ENCODE measurements at regions of chr19 and their contacts with region 1.

Region 1: DNA sequence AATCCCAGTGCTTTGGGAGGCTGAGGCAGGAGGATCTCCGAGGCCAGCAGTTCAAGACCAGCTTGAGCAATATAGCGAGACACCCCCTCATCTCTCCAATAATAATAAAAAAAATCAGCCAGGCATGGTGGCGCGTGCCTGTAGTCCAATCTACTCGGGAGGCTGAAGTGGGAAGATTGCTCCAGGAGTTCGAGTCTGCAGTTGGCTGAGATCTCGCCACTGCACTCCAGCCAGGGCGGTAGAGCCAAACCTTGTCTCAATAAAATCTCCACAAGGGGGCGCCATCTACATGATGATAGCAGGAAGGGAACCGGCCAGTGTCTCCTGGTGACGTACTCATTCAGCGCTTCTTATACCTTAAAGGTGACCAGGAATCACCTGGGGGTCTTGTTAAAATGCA is 13.6 kb upstream of the C5AR1 start:
- DNase-seq: peak; percentile 93
- H3K4me3 Mint-ChIP-seq: no peak overlapping the region
- H3K27ac Mint-ChIP-seq: no peak overlapping the region
- H3K4me1 Mint-ChIP-seq: no peaks in the 10 kb centered on the region
- H3K27me3 Mint-ChIP-seq: no peaks in the 10 kb centered on the region
- CTCF ChIP-seq: peak; percentile 71

Region 2: GRCh38 chr19:47428177-47428894 is 132.3 kb after region 1 on chr19:
- CTCF ChIA-PET with region 1: interaction called, 13 read pairs
- POLR2A ChIA-PET with region 1: interaction called, 4 read pairs
- intact Hi-C with region 1: loop called (anchors 1 kb)
- DNase-seq: peak; percentile 98
- H3K4me3 Mint-ChIP-seq: no peak overlapping the region
- H3K27ac Mint-ChIP-seq: no peak overlapping the region
- H3K4me1 Mint-ChIP-seq: no peaks in the 10 kb centered on the region
- H3K27me3 Mint-ChIP-seq: peaks cover 7% of the 10 kb centered on the region
- CTCF ChIP-seq: no peak